Activated B cell treated with CpG ODN at 0.5 μM for 24 hours (primary cell): ENCODE measurements at regions of chr21 and their contacts with region 1.

Region 1: DNA sequence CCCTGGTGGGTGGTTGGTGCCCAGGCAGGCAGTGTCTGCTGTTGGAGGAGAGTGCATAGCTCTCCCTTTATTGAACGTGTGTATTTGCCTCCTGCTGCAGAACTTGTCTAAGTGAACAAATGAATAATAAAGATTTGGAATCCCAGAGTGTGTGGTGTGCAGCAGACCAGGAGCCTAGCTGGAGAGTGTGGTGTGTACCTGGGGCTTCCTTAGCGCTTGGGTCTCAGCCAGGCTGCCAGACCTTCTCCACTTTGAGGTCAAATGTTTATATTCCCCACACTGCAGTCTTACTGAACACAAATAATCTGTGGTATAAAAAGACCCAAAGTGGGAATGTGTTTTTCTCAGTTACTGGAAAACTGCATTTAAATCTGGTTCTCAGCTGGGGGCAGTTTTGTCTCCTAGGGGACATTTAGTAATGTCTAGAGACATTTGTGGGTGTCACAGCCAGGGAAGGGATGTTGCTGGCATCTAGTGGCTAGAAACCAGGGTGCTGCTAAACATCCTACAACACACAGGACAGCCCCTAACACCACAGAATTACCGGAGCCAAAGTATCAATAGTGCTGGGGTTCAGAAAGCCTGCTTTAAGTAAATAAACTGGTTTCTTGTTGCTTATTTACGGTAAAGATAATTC is 23.6 kb downstream of the SLC37A1 start:
- DNase-seq: no peak
- ATAC-seq: no peak
- H3K4me3 Mint-ChIP-seq: peak overlapping the region; percentile 24
- H3K27ac Mint-ChIP-seq: peak overlapping the region; percentile 90
- H3K4me1 Mint-ChIP-seq: peaks cover 56% of the 10 kb centered on the region
- H3K27me3 Mint-ChIP-seq: no peaks in the 10 kb centered on the region
- CTCF ChIP-seq: no peak

Region 2: GRCh38 chr21:42145569-42146272 is 391.5 kb before region 1 on chr21:
- CTCF ChIA-PET with region 1: interaction called, 8 read pairs
- POLR2A ChIA-PET with region 1: no interaction called
- intact Hi-C with region 1: loop called (anchors 1 kb)
- DNase-seq: peak; percentile 36
- ATAC-seq: peak; percentile 86
- H3K4me3 Mint-ChIP-seq: no peak overlapping the region
- H3K27ac Mint-ChIP-seq: no peak overlapping the region
- H3K4me1 Mint-ChIP-seq: peaks cover 7% of the 10 kb centered on the region
- H3K27me3 Mint-ChIP-seq: no peaks in the 10 kb centered on the region
- CTCF ChIP-seq: no peak

Region 3: DNA sequence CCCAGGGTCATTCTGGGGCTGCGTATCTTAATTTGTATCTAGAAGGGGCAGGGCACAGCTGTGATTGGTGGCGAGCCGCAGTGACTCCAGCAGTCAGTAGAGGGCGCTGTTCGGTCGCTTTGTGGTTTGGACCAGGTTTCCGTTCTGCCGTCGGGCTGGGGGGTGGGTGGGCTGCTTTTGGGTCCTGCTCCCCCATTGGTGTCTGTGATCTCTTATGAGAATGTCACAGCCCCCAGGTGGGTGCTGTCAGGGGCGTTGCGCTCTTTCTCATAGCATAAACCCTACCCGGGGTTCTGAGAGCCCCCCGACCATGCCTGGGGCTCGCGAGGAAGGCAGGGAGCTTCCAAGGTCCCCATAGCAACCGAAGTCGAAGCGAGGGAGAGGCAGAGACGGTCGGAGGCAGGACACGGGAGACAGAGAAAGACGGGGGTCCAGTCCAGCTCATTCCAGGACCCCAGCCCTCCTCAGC is 227.4 kb before region 1 on chr21:
- CTCF ChIA-PET with region 1: interaction called, 25 read pairs
- POLR2A ChIA-PET with region 1: no interaction called
- intact Hi-C with region 1: loop called (anchors 1 kb)
- DNase-seq: peak; percentile 43
- ATAC-seq: peak; percentile 71
- H3K4me3 Mint-ChIP-seq: no peak overlapping the region
- H3K27ac Mint-ChIP-seq: no peak overlapping the region
- H3K4me1 Mint-ChIP-seq: peaks cover 6% of the 10 kb centered on the region
- H3K27me3 Mint-ChIP-seq: peaks cover 18% of the 10 kb centered on the region
- CTCF ChIP-seq: no peak

Region 4: GRCh38 chr21:42453509-42454229 is 83.6 kb before region 1 on chr21:
- CTCF ChIA-PET with region 1: interaction called, 10 read pairs
- POLR2A ChIA-PET with region 1: interaction called, 4 read pairs
- intact Hi-C with region 1: loop called (anchors 1 kb)
- DNase-seq: no peak
- ATAC-seq: no peak
- H3K4me3 Mint-ChIP-seq: no peak overlapping the region
- H3K27ac Mint-ChIP-seq: no peak overlapping the region
- H3K4me1 Mint-ChIP-seq: peaks cover 11% of the 10 kb centered on the region
- H3K27me3 Mint-ChIP-seq: no peaks in the 10 kb centered on the region
- CTCF ChIP-seq: no peak

Region 5: DNA sequence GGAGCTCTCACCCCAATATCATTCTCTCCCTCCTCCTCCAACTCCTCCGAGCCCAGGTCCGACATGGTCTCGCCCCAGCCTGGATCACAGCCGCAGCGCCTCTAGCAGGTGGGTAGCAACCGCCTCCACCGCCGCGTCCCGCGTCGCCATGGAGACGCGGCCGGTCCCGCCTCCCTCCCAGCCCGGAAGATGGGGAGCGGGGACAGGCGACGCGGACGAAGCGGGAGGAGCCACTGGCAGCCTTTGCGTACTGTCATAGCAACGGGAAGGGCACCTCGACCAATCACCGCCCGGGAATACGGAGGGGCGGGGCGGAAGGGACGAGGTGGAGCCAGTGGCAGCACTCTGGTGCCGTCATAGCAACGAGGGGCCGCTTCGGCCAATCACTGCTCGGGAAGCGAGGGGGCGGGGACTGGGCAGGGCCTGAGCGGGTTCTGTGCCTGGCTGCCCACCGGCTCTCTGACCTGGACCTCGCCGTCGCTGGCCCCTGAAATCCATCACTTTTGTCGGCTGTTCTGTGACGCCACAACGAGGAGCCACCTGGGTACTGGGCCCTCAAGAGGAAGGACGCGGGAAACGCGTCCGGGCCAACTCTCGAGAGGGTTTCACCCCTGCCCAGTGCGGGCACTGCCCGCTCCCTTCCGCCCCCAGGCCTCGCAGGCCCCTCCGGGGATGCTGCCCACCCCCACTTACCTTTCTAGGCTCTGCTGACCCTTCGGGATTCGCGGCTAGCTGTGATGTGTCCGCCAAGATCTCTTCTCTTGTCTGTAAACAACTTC is 40.9 kb before region 1 on chr21 and contains the start of gene RSPH1:
- CTCF ChIA-PET with region 1: interaction called, 4 read pairs
- POLR2A ChIA-PET with region 1: interaction called, 9 read pairs
- intact Hi-C with region 1: loop called (anchors 1 kb)
- DNase-seq: peak; percentile 99
- ATAC-seq: peak; percentile 96
- H3K4me3 Mint-ChIP-seq: peak within 1 kb of the TSS; percentile 88
- H3K27ac Mint-ChIP-seq: peak within 1 kb of the TSS; percentile 83
- H3K4me1 Mint-ChIP-seq: peaks cover 13% of the 10 kb centered on the region
- H3K27me3 Mint-ChIP-seq: no peaks in the 10 kb centered on the region
- CTCF ChIP-seq: no peak
- total RNA-seq, gene RSPH1: 0.38 TPM in 1 of 2 replicates, not detected in the other

Region 6: GRCh38 chr21:42641311-42642218 is 104.3 kb after region 1 on chr21:
- CTCF ChIA-PET with region 1: no interaction called
- POLR2A ChIA-PET with region 1: no interaction called
- intact Hi-C with region 1: no loop called
- DNase-seq: no peak
- ATAC-seq: no peak
- H3K4me3 Mint-ChIP-seq: no peak overlapping the region
- H3K27ac Mint-ChIP-seq: no peak overlapping the region
- H3K4me1 Mint-ChIP-seq: no peaks in the 10 kb centered on the region
- H3K27me3 Mint-ChIP-seq: peaks cover 8% of the 10 kb centered on the region
- CTCF ChIP-seq: no peak